Head of caudate nucleus (tissue), 42 donors: ENCODE measurements at regions of chr2 and their contacts with region 1.

Region 1: DNA sequence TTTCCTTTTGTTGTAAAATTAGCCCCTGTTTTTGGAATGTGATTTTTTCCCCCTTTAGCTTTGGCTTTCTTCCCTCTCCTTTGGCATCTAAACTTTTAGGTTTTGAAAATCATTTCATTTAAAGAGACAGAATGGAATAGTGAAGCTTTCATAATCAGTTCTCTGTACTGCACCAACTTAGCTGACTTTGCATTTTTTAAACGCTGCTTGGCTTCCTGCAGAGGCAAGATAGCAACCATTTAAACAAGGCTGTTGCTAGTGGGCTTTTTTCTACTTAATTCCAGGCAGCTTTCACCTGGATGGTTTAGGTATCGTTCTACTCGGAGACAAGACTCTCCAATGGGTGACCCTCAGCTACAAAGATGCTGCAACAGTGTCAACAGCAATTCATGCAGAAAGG is 267.9 kb upstream of the PKDCC start:
- DNase-seq: no peak

Region 2: GRCh38 chr2:39913648-39914461 is 1866.0 kb before region 1 on chr2:
- intact Hi-C with region 1: loop called (anchors 10 kb)
- DNase-seq: peak in 8 of 42 donors; percentile 9 to 71 (median 27)